Common myeloid progenitor, CD34-positive (primary cell): ENCODE measurements at regions of chr9 and their contacts with region 1.

Region 1: GRCh38 chr9:100598641-100599145 is 20.8 kb downstream of the CAVIN4 start:
- DNase-seq: peak; percentile 70 to 79 (median 77)
- H3K4me3 ChIP-seq: peak overlapping the region; percentile 50 to 84 (median 68)
- H3K27ac ChIP-seq: no peak overlapping the region
- H3K4me1 ChIP-seq: peaks cover 0 to 13% (median 9%) of the 10 kb centered on the region in 4 experiments
- H3K27me3 ChIP-seq: peaks cover 0 to 5% (median 2%) of the 10 kb centered on the region in 5 experiments

Region 2: GRCh38 chr9:100561256-100561655 is 37.4 kb before region 1 on chr9:
- CTCF ChIA-PET with region 1: no interaction called
- POLR2A ChIA-PET with region 1: no interaction called
- DNase-seq: no peak
- H3K4me3 ChIP-seq: no peak overlapping the region
- H3K27ac ChIP-seq: no peak overlapping the region
- H3K4me1 ChIP-seq: no peaks in the 10 kb centered on the region
- H3K27me3 ChIP-seq: no peaks in the 10 kb centered on the region

Region 3: GRCh38 chr9:100573655-100574260 is 24.9 kb before region 1 on chr9:
- CTCF ChIA-PET with region 1: interaction called, 11 read pairs
- POLR2A ChIA-PET with region 1: no interaction called
- DNase-seq: no peak
- H3K4me3 ChIP-seq: no peak overlapping the region
- H3K27ac ChIP-seq: no peak overlapping the region
- H3K4me1 ChIP-seq: no peaks in the 10 kb centered on the region
- H3K27me3 ChIP-seq: no peaks in the 10 kb centered on the region

Region 4: DNA sequence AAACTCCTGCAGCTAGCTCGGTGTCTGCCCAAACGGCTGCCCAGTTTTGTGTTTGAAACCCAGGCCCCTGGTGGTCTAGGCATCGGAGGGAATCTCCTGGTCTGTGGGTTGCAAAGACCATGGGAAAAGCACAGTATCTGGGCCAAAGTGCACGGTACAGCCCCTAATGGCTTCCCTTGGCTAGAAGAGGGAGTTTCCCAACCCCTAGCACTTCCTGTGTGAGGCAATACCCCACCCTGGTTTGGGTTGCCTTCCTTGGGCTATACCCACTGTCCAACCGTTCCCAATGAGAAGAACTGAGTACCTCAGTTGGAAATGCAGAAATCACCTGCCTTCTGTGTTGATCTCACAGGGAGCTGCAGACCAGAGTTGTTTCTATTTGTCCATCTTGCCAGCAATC is 21.0 kb after region 1 on chr9:
- CTCF ChIA-PET with region 1: interaction called, 14 read pairs
- POLR2A ChIA-PET with region 1: no interaction called
- DNase-seq: no peak
- H3K4me3 ChIP-seq: no peak overlapping the region
- H3K27ac ChIP-seq: no peak overlapping the region
- H3K4me1 ChIP-seq: no peaks in the 10 kb centered on the region
- H3K27me3 ChIP-seq: no peaks in the 10 kb centered on the region

Region 5: GRCh38 chr9:100714372-100715099 is 115.8 kb after region 1 on chr9:
- CTCF ChIA-PET with region 1: interaction called, 12 read pairs
- POLR2A ChIA-PET with region 1: no interaction called
- DNase-seq: peak; percentile 22 to 55 (median 41)
- H3K4me3 ChIP-seq: no peak overlapping the region
- H3K27ac ChIP-seq: no peak overlapping the region
- H3K4me1 ChIP-seq: no peaks in the 10 kb centered on the region
- H3K27me3 ChIP-seq: peaks cover 0 to 4% (median 0%) of the 10 kb centered on the region in 5 experiments

Region 6: DNA sequence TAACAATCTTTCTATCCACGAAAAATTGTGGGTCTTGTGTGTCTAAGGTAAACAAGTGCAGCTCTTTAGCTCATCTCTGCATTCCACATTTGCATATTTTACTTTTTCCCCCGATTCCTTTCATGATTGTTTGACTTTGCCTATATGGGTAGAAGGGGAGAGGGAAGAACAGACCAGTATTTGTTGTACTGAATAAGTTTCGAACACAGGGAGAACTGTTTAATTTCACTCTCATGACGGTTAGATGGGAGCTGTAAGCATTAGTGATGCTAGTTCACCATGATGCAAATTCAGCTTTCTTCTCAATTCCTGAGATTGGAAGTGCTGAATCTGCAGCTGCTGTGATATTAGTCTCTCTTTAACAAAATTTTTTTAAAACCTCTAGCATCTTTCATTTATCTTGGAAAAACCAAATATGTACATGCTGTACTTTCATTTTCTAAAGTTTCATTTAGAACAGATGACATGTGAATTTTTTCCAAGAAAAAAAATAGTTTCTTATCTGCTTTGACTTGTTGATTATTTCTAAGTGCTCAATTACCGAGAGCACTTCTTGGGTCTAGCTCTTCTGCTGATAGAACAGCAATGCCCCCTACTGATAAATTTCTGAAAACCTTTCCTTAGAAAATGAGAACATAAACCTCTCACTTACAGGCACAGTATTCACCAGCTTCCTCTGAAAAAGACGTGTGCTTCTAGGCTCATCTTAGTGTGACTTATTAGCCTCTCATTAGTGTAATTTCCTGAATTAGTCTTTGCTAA is 636.6 kb after region 1 on chr9:
- CTCF ChIA-PET with region 1: interaction called, 10 read pairs
- POLR2A ChIA-PET with region 1: no interaction called
- DNase-seq: peak; percentile 22 to 46 (median 24)
- H3K4me3 ChIP-seq: no peak overlapping the region
- H3K27ac ChIP-seq: no peak overlapping the region
- H3K4me1 ChIP-seq: no peaks in the 10 kb centered on the region
- H3K27me3 ChIP-seq: peaks cover 0 to 3% (median 0%) of the 10 kb centered on the region in 5 experiments

Region 7: GRCh38 chr9:101311758-101312420 is 713.2 kb after region 1 on chr9:
- CTCF ChIA-PET with region 1: interaction called, 62 read pairs
- POLR2A ChIA-PET with region 1: no interaction called
- DNase-seq: peak; percentile 78 to 93 (median 88)
- H3K4me3 ChIP-seq: no peak overlapping the region
- H3K27ac ChIP-seq: no peak overlapping the region
- H3K4me1 ChIP-seq: peaks cover 0 to 4% (median 2%) of the 10 kb centered on the region in 4 experiments
- H3K27me3 ChIP-seq: peaks cover 0 to 53% (median 22%) of the 10 kb centered on the region in 5 experiments